Left ventricle myocardium superior (tissue), 1 donor: ENCODE measurements at regions of chr21 and their contacts with region 1.

Region 1: GRCh38 chr21:36209626-36210171 is 53.1 kb downstream of the DOP1B start:
- DNase-seq: no peak
- ATAC-seq: no peak

Region 2: DNA sequence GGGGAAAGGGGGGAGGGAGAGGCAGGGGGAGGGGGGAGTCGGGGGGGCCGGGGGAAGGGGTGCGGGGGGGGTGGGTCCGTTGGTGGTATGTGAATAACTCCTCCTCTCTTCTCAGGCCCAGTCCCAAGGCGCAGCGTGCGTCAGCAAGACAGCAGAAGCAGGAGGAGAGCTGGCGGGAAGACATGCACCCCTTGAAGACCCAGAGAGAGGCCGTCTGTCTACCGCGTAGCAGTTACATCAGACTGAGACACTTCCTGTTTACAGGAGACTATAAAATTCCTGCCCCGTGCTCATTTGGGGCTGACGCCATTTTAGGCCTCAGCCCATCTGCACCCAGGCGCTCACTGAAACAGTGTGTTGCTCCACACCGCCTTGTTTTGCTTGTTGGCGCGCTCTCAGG is 204.7 kb before region 1 on chr21:
- intact Hi-C with region 1: no loop called
- DNase-seq: no peak
- ATAC-seq: no peak

Region 3: DNA sequence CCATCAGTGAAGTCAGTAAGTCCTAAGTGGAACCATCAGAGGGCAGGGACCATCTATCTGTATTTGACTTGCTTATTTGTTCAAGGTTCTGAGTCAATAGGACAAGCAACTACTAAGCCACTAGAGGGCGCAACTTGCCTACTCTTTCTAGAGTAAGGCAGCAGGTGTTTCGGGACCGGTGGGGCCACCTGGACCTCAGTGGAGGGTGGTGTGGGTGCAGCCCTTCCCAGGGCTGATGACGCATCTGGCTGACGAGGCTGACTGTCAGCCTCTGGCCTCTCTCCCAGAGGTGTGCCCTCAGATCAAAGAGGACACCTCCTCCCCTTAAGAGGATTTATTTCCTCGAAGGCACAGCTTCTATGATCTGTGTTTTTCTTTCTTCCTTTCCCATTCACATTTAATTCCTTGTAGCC is 68.2 kb before region 1 on chr21:
- intact Hi-C with region 1: loop called (anchors 5 kb)
- DNase-seq: peak; percentile 56
- ATAC-seq: peak; percentile 84